Activated CD4-positive, alpha-beta T cell treated with anti-CD3 and anti-CD28 coated beads, Interleukin-2, amount 10 ng/mL, durations not matched to agents 24 days and 14 days (primary cell): ENCODE measurements at regions of chr17 and their contacts with region 1.

Region 1: DNA sequence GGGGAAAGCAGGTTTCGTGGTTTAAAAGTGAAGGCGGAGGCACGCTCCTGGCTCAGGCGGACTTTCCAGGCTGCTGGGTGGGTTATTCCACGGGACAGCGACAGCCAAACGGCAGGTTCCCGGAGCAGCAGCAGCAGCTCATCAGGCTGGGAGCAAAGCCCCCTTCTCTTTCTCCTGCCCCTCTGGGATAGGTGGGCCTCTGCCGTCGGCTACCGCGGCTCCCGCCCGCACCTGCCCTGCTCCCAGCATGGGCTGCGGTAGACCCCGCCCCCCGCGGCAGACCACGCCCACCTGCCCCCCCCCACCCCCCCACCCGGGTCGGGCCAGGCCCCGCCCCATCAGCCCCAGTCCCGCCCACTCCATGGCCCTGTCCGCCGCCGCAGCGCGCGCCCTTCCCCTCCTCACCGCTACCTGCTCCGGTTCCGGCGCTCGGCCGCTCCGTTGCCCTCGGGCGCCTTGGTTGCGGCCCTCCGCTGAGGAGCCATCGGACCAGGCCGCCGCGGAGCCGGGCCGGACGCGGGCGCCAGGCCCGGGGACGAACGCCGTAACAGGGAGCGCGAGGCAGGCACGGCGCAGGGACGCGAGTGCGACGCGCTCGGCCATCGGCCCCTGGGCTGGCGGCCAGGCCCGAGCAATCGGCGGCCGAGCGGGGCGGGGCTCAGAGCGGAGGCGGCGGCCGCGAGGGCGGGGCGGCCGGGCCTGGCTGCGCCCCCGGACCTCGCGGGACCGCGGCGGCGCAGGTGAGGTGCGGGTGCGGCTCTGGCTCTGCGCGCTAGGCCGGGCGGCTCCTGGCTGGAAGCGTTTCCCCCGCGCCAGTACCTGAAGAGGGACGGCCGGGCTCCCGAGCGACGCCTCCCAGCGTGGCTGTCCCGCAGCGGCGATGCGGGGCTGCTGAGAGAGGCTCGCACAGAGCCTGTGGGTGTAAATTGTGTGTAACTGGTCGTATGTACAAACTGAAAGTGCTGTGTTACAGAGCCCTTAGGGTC is at the starts of genes HEXD and OGFOD3:
- DNase-seq: peak; percentile 97
- H3K4me3 Mint-ChIP-seq: peak within 1 kb of the TSS; percentile 83
- H3K27ac Mint-ChIP-seq: peak within 1 kb of the TSS; percentile 90
- H3K4me1 Mint-ChIP-seq: peaks cover 22% of the 10 kb centered on the region
- H3K27me3 Mint-ChIP-seq: no peaks in the 10 kb centered on the region
- total RNA-seq, gene HEXD: 33.1 and 36.0 TPM in 2 replicates
- total RNA-seq, gene OGFOD3: 26.7 and 33.0 TPM in 2 replicates

Region 2: DNA sequence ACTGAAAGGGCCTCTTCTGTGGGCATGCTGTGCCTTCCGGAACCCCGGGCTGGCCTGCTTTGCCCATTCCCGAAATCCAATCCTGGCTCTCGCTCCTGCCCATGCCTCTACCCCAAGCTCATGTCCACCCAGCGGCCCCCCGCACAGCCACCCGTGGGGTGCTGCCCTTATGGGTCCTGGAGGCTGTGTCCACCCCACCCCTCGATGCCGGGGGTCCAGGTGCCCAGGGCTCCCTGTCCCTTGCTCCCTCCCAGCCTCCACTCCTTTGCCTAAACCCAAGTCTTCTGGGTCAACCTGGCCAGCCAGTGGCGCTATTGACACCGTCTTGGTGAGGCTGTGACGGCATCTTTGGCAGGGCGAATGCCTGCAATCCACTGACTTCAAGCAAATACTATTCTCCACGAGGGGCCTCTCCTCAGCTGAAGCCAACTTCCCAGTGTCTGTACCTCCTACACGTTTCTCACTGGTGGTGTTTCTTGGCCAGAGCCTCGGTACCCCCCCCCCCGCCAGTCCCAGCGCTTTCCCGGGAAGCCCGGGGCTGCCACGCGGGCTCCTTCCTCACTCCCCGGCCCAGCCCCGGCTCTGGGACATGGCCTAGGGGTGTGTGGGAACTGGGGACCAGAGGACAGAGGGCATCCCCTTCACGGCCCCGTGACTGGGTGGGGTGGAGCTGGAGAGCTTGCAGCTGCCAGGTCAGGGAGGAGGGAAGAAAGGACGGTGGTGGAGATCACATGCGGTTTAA is 340.5 kb before region 1 on chr17:
- intact Hi-C with region 1: no loop called
- DNase-seq: no peak
- H3K4me3 Mint-ChIP-seq: no peak overlapping the region
- H3K27ac Mint-ChIP-seq: no peak overlapping the region
- H3K4me1 Mint-ChIP-seq: no peaks in the 10 kb centered on the region
- H3K27me3 Mint-ChIP-seq: peaks cover 4% of the 10 kb centered on the region

Region 3: GRCh38 chr17:82230627-82231311 is 187.5 kb before region 1 on chr17:
- intact Hi-C with region 1: loop called (anchors 10 kb)
- DNase-seq: peak; percentile 92
- H3K4me3 Mint-ChIP-seq: peak overlapping the region; percentile 96
- H3K27ac Mint-ChIP-seq: no peak overlapping the region
- H3K4me1 Mint-ChIP-seq: peaks cover 8% of the 10 kb centered on the region
- H3K27me3 Mint-ChIP-seq: no peaks in the 10 kb centered on the region

Region 4: DNA sequence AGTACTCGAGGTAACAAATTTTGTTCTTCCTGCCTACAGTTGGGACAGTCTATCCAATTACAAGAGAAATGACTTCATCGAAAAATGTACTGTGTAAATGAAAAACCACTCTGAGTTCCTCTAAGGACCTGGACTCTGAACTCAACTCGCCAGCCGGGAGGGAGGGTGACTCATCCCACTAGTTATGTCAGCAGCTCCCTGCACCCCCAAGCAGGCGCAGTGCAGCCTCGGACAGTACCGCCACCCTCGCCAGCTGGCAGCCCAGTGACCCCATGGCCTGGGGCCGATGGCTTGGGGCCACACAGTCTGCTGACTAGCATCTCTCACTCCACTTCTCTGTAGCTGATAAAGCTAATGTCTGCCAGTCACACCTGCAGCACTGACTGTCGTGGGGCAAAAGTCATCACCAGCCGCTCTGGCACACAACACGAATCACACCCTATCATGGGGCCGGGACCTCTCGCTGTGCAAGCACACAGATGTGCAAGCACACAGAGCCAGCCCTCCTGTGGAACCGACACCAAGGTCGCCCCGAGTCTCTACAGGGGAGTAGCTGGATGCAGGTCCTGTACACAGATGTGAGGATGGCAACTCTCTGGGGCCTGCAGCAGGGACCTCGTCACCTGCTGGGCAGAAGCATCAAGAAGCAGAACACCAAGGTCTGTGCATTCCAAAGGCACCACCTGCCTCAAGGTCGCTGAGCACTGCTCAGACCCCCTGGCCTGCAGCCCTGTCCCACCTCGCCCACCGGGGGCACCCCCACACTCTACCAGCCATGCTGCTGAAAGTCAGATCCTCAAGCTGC is 150.5 kb before region 1 on chr17:
- intact Hi-C with region 1: no loop called
- DNase-seq: peak; percentile 67
- H3K4me3 Mint-ChIP-seq: peak overlapping the region; percentile 6
- H3K27ac Mint-ChIP-seq: peak overlapping the region; percentile 30
- H3K4me1 Mint-ChIP-seq: peaks cover 56% of the 10 kb centered on the region
- H3K27me3 Mint-ChIP-seq: no peaks in the 10 kb centered on the region

Region 5: DNA sequence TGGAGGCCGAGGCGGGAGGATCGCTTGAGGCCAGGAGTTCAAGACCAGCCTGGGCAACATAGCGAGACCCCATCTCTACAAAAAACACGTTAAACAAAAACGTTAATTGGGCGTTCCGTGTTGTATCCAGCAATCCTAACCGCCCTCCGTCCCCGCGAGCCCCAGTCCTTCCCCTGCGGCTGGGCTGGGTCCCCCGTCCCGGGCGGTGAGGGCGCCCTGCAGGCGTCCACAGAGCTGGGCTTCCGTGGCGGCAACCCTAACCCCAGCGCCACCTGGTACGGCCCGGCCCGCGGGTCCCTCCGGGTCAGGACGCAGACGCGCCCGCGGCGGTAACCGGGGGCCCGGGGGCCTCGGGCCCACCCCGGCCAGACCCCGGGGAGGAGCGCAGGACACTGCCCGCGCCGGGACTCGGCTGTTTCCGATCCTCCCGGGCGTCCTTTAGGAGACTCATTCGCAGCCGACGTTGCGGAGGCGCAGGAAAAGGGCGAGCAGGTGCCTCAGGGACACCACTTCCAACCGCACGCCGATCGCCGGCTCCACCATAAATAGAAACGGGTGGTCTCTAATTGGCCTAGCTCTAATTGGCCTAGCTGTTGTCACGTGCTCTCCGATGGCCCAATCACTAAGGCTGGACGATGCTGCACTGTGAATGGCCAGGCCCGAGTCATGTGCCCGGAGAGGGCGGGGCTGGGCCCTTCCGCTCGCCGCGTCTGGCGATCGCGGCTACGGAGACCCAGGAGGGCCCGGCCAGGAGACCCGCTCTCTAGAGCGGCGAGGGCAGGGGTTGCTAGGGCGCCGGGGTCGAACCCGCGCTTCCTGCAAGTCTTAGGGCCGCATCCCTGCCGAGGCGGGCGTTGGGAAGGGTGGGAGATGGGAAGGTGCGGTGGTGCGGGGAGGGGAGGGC is 125.8 kb before region 1 on chr17:
- intact Hi-C with region 1: loop called (anchors 2 kb)
- DNase-seq: peak; percentile 98
- H3K4me3 Mint-ChIP-seq: peak overlapping the region; percentile 87
- H3K27ac Mint-ChIP-seq: peak overlapping the region; percentile 93
- H3K4me1 Mint-ChIP-seq: peaks cover 43% of the 10 kb centered on the region
- H3K27me3 Mint-ChIP-seq: peaks cover 2% of the 10 kb centered on the region

Region 6: DNA sequence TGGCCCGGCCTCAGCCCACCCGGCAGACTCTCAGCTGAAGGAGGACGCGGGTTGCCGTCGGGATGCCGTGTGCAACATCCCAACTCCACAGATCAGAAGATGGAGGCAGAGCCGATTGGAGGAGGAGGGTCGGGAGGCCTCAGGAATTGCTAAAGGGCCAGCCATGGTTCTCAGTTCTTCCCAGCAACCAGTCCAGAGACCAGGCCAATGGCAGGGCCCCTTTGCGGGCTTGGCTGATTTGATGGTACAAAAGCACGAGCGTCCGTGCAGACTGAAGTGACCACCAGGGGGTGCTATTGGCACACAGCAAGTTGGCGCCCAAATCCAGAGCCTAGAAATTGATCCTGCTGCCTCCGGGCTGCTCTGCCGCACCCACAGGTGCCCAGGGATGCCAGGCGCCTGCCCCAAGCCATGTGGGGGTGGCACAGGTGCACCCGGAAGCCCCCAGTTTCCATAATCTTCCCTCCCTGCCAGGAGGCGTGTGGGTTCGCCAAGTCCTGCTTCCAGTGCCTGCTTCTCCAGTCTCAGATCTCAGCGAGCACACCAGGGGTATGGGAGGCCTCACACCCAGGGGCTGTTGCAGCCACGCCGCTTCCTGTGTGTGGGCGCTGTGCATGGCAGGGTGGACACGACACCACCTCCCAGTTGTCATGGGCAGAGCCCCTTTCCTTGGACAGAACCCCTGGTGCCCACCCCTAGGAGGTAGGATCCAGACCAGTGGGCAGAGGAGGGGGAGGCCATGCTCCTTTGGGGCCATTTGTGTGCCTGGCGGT is 66.4 kb before region 1 on chr17:
- intact Hi-C with region 1: loop called (anchors 1 kb)
- DNase-seq: peak; percentile 94
- H3K4me3 Mint-ChIP-seq: no peak overlapping the region
- H3K27ac Mint-ChIP-seq: no peak overlapping the region
- H3K4me1 Mint-ChIP-seq: peaks cover 2% of the 10 kb centered on the region
- H3K27me3 Mint-ChIP-seq: peaks cover 3% of the 10 kb centered on the region

Region 7: DNA sequence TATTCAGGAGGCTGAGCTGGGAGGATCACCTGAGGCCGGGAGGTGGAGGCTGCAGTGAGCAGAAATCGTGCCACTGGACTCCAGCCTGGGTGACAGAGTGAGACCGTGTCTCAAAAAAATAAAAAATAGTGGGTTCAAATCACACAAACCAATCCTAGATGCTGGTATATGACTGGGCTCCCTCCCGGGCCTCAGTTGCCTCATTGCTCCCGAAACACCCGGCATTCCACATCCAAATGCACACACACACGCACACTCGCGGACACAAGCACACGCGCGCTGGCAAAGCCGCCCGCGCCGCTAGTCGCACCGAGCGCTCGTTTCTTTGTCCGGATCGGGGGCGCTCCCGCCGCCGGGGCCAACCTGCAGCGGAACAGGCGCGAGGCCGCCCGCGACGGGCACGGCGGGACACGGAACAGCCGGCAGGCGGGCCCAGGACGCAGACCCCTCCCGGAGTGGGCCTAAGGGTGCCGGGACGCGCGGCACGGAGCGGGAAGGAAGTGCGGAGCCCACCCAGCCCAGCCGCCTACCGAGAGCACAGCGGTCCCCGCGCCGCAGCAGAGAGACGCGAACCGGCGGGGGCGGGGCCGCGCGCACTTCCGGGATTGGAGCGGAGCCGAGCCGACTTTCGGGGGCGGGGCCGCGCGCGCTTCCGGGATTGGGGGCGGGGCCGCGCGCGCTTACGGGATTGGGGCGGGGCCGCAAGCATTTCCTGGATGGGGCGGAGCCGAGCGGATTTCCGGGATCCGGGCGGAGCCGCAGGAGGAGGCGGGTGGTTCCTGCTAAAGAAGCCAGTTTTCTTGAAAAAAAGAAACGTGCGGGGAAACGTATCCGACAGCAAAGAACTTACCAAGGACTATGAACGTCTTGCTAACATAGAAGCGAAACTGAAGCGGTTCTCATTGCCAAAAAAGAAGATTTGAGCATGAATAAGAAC is 32.1 kb after region 1 on chr17 and contains the start of gene CYBC1:
- intact Hi-C with region 1: loop called (anchors 1 kb)
- DNase-seq: peak; percentile 98
- H3K4me3 Mint-ChIP-seq: peak within 1 kb of the TSS; percentile 89
- H3K27ac Mint-ChIP-seq: peak within 1 kb of the TSS; percentile 95
- H3K4me1 Mint-ChIP-seq: peaks cover 20% of the 10 kb centered on the region
- H3K27me3 Mint-ChIP-seq: no peaks in the 10 kb centered on the region
- total RNA-seq, gene CYBC1: 256 and 268 TPM in 2 replicates